Mammary epithelial cell (primary cell): ENCODE measurements at regions of chr3 and their contacts with region 1.

Region 1: DNA sequence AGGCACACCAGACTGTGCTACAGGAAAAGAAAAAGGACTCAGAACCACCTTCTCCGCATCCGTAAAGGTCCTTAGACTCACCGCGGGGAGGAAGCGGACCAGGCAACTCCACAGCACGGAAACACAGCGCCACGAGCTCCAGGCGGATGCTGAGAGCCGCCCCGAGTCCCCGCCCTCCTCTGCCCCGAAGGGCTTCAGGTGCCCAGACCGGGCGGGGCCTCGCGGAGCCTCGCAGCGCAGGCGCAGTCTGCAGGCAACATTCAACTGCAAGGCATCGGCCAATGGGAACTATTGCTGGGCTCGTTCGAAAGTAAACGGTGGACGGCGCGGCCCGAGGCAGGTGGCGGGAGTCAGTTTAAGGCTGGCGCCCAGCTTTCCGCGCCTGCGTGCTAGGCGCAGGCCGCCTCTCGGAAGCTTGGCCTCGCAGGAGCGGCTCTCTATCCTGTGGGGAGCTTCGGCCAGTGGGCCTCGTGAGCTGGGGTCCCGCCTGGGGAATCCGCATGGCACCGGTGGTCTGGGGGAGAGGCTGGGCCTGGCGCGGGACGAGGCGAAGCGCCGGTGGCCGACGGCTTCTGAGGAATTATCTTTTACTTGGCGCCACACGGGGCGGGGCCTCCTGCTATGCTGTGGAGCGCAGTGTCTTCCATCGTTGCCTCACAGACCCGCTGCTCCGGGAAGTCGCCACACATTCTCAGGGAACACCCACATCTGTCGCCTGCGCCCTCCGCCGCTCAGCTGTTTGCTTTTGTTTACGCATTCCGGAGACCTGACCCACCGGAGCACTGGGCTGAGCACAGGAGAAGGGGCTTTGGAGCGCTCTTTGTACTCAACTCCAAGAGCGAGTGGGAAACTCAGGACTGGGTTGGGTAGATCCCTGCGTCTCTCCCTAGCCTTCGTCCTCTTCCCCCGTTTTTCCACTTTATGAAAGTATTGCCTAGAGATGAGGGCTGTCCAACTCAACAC is at the start of gene TRIM59:
- DNase-seq: peak; percentile 98
- H3K4me3 ChIP-seq: peak within 1 kb of the TSS; percentile 68 to 82 (median 72)
- H3K27ac ChIP-seq: peak within 1 kb of the TSS; percentile 60
- H3K4me1 ChIP-seq: peaks cover 8% of the 10 kb centered on the region
- H3K27me3 ChIP-seq: no peaks in the 10 kb centered on the region
- CTCF ChIP-seq: peak in 1 of 2 donors; percentile 30
- total RNA-seq, gene TRIM59: 9.7 to 15.2 TPM

Region 2: DNA sequence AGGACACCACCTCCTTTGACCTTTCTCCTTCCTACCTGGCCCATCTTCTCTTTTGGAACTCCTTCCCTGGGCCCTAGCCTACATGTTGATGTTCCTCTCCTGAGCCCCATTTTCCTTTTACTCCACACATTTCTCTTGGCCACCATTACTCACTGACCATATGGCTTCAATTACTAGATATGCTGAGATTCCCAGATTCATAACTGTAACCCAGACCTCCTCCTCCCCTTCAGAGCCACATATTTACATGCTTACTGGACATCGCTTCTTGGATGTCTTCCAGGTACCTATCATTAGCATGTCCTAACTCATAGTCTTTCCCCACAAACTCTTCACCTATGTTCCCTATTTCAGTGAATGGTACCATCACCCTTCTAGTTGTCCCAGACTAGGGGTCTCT is 24.1 kb after region 1 on chr3:
- CTCF ChIA-PET with region 1: no interaction called
- dilution Hi-C with region 1: no loop called
- in situ Hi-C with region 1: no loop called
- intact Hi-C with region 1: loop called (anchors 1 kb)
- DNase-seq: peak; percentile 85
- H3K4me3 ChIP-seq: no peak overlapping the region
- H3K27ac ChIP-seq: no peak overlapping the region
- H3K4me1 ChIP-seq: peaks cover 36% of the 10 kb centered on the region
- H3K27me3 ChIP-seq: no peaks in the 10 kb centered on the region
- CTCF ChIP-seq: no peak

Region 3: DNA sequence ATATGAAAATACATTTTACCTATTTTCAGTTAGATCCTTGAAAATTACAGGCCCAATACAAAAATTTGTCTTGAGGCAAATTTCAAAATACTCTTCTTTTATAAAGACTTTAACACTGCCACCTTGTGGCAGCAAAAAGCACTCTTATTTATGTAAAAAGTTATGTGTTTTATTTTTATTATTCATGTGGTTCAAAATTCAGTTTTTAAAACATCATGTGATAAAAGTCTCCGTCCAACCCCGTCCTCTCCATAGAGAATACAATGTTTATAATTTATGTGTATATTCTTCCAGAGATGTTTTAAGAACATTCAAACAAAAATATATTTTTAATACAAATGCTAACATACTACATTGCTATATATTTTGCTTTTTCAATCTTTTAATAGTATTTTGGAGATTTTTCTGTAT is 36.5 kb after region 1 on chr3:
- CTCF ChIA-PET with region 1: no interaction called
- dilution Hi-C with region 1: no loop called
- in situ Hi-C with region 1: no loop called
- intact Hi-C with region 1: loop called (anchors 1 kb)
- DNase-seq: no peak
- H3K4me3 ChIP-seq: no peak overlapping the region
- H3K27ac ChIP-seq: no peak overlapping the region
- H3K4me1 ChIP-seq: no peaks in the 10 kb centered on the region
- H3K27me3 ChIP-seq: no peaks in the 10 kb centered on the region
- CTCF ChIP-seq: peak; percentile 53 to 58

Region 4: DNA sequence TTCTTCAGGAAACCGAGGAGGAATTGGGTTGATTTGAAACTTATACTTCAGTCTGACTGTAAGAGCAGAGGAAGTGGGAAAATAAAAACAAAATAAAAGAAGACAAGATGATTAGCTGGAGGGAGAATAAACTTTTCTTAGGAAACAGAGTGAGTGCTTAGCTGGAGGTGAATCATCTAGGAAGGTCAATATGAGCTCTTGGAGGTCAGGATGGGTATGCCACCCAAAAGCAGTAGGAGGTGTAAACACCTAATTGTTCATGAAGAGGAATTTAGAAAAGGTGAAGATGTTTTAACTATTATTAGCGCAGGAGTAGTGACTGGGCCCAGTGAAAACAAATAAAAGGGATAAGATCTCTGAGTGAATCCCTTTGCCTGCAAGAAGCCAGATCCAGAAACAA is 187.2 kb after region 1 on chr3:
- CTCF ChIA-PET with region 1: no interaction called
- dilution Hi-C with region 1: no loop called
- in situ Hi-C with region 1: no loop called
- intact Hi-C with region 1: no loop called
- DNase-seq: peak; percentile 12
- H3K4me3 ChIP-seq: no peak overlapping the region
- H3K27ac ChIP-seq: no peak overlapping the region
- H3K4me1 ChIP-seq: no peaks in the 10 kb centered on the region
- H3K27me3 ChIP-seq: no peaks in the 10 kb centered on the region
- CTCF ChIP-seq: no peak